Prostate gland (tissue), 2 donors: ENCODE measurements at regions of chr10 and their contacts with region 1.

Region 1: DNA sequence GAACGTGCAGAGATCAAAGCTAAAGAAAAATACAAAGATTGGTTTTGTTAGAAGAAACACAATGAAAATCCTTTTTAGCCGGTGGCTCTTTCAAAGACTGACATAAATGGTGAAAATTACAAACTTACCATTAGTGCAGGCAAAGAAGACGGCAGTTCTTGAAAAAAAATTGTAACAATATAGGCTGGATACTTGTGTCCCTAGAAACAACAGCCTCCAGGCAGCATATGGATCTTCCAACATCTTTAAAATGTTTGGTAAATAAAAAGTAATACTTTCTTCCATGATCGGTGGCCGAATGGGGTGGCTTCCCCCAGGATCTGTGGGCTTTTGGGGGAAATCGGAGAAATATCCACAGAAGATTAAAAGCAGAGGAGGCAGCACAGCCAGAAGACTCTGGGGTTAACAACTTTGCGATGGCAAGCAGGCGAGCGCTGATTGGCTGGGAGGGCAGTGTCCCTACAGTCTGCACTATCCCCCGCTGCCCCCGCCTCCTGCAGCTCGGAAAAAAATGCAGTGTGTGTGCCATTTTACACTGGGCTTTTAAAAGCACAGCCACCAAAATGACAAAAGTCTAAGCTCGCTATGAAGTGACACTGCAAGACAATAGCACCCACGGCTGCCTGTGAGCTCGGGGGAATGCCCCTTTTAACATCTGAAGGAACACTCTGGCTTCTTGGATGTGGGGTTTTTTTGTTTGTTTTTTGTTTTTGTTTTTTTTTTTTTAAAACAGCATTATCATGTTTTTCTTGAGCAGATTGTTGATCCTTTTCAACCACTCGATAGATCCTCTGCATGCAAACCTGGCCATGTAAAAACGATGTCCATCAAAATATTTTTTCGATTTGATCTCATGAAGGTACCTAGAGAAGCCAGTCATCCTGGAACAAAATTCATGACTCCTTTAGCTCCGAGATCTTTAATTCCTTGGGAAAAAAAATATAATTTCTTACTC is 31.7 kb upstream of the EPC1 start:
- DNase-seq: peak; percentile 95
- H3K4me3 ChIP-seq: peak overlapping the region; percentile 55 to 59
- H3K27ac ChIP-seq: peak overlapping the region; percentile 82 to 84
- H3K4me1 ChIP-seq: no peaks in the 10 kb centered on the region
- H3K27me3 ChIP-seq: no peaks in the 10 kb centered on the region
- CTCF ChIP-seq: no peak
- POLR2A ChIP-seq: peak; percentile 68

Region 2: GRCh38 chr10:32445740-32446535 is 67.3 kb after region 1 on chr10 and contains the start of gene CCDC7:
- intact Hi-C with region 1: loop called (anchors 2 kb)
- DNase-seq: peak; percentile 69
- H3K4me3 ChIP-seq: peak within 1 kb of the TSS; percentile 42 to 49
- H3K27ac ChIP-seq: peak within 1 kb of the TSS; percentile 92 to 95
- H3K4me1 ChIP-seq: no peaks in the 10 kb centered on the region
- H3K27me3 ChIP-seq: no peaks in the 10 kb centered on the region
- CTCF ChIP-seq: peak in 3 of 4 experiments; percentile 35 to 49 (median 48)
- POLR2A ChIP-seq: no peak
- total RNA-seq, gene CCDC7: 12.9 to 19.8 TPM